Activated CD4-positive, alpha-beta T cell treated with anti-CD3 and anti-CD28 coated beads, Interleukin-2, amount 10 ng/mL, durations not matched to agents 24 days and 14 days (primary cell): ENCODE measurements at regions of chr11 and their contacts with region 1.

Region 1: DNA sequence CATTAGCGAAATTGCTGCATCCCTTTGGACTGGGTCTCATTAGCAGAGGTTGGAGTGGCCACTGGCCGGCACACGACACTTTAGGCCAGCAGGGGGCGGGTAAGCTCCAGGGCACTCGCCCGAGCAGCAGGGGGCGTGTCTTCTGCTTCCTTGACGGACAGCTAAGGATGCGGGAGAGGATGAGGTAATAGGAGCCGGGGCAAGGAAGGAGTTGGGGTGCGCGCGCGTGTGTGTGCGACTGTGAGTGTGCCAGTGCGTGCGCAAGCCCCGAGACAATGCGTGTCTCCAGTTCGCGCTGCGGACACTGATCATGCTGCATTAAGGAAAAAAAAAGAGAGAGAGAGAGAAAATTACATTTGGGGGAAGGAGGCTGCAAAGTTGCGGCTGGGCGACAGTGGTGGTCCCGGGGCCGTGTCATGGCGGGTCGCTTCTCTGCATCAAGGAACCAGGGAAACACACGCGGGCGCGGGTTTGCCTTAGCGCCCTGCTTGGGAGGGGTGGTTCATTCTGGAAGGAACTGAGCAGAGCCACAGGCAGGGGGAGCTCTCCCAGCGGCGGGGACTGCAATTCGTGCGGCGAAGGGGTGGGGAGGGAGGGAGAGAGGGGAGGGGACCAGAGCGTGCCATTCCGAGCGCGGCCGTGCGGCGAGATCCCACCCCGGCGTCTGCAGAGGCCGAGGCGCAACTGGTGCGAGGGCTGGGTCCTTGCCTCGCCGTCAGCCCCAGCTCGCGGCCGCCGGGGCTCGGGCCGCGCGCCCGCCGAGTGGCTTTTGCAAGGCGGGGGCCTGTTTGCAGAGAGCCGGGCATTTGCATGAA is at the start of gene DTX4:
- DNase-seq: peak; percentile 97
- H3K4me3 Mint-ChIP-seq: peak within 1 kb of the TSS; percentile 87
- H3K27ac Mint-ChIP-seq: no peak within 1 kb of the TSS
- H3K4me1 Mint-ChIP-seq: peaks cover 9% of the 10 kb centered on the region
- H3K27me3 Mint-ChIP-seq: peaks cover 36% of the 10 kb centered on the region
- total RNA-seq, gene DTX4: 0.17 and 0.47 TPM in 2 replicates

Region 2: DNA sequence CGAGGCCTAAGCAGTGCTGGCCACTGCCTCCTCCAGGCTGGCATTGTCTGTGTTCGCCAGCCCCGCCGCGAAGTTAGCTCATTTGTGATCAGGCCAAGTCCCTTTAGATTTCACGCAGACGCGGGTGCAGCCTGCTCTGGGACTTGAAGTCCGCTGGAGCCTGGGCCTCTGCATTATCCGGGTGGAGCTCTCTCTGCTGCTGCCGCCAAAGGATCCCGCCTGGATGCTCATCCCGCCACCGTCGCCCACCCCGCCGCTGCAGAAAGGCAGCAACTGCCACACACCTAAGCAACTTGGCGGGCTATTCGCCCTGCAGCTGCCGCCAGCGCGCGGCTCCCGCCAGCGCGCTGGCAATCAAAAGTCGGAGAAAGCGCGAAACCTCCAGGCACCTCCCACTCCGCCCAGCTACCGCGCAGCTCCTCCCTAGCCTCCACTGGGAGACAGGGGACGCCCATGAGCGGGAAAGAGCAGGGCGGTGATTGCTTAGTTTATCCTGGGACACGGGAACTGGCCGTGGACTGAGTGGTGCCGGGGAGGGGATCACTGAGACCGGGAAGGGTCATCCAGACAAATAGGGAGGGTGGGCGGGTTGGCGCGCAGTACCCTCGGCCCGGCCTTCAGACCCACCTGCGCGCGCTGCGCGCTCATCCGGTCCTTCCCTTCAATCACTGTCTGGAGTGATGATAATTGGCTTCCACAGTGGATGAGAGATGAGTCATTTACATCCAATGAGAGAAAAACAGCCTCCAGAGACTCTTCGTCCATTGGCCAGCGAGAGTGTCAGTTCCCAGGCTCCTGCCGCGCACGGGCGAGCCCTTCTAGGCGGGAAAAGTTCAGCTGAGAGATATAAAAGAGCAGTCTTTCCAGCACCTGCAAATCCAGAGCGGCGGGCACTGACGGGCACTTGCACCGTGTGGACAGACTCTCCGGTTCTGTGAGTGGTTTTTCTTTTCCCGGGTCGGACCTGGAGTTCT is 65.1 kb before region 1 on chr11 and contains the start of gene FAM111B:
- intact Hi-C with region 1: no loop called
- DNase-seq: peak; percentile 93
- H3K4me3 Mint-ChIP-seq: peak within 1 kb of the TSS; percentile 94
- H3K27ac Mint-ChIP-seq: peak within 1 kb of the TSS; percentile 85
- H3K4me1 Mint-ChIP-seq: peaks cover 66% of the 10 kb centered on the region
- H3K27me3 Mint-ChIP-seq: no peaks in the 10 kb centered on the region
- total RNA-seq, gene FAM111B: 68.4 and 70.1 TPM in 2 replicates

Region 3: GRCh38 chr11:59199546-59200422 is 28.1 kb after region 1 on chr11:
- intact Hi-C with region 1: loop called (anchors 2 kb)
- DNase-seq: no peak
- H3K4me3 Mint-ChIP-seq: no peak overlapping the region
- H3K27ac Mint-ChIP-seq: peak overlapping the region; percentile 10
- H3K4me1 Mint-ChIP-seq: peaks cover 12% of the 10 kb centered on the region
- H3K27me3 Mint-ChIP-seq: peaks cover 24% of the 10 kb centered on the region

Region 4: DNA sequence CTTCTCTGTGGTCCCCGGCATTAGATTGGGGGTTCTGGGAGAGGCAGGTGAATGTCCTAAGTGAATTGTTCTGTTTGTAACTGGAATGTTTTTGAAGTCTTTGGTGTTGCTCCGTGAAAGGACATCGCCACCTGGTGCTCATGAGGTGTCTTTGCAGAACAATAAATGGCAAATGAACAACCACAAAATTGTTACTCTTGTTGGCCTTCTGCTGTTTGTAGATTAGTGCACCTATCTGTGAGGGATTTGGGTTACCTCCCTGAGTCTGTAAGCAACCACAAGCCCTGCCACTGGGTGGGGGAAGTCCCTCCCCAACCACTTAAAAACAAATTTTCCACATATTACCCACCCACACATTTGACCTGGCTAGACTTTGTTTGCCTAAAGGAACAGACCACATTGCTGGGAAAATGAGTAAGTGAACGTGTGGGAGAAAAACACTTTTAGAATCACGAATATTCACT is 36.3 kb after region 1 on chr11:
- intact Hi-C with region 1: loop called (anchors 1 kb)
- DNase-seq: peak; percentile 73
- H3K4me3 Mint-ChIP-seq: peak overlapping the region; percentile 59
- H3K27ac Mint-ChIP-seq: peak overlapping the region; percentile 64
- H3K4me1 Mint-ChIP-seq: peaks cover 29% of the 10 kb centered on the region
- H3K27me3 Mint-ChIP-seq: peaks cover 56% of the 10 kb centered on the region

Region 5: GRCh38 chr11:59283825-59284772 is 112.4 kb after region 1 on chr11:
- intact Hi-C with region 1: loop called (anchors 1 kb)
- DNase-seq: peak; percentile 82
- H3K4me3 Mint-ChIP-seq: peak overlapping the region; percentile 73
- H3K27ac Mint-ChIP-seq: no peak overlapping the region
- H3K4me1 Mint-ChIP-seq: peaks cover 7% of the 10 kb centered on the region
- H3K27me3 Mint-ChIP-seq: peaks cover 18% of the 10 kb centered on the region

Region 6: GRCh38 chr11:59295435-59295834 is 123.7 kb after region 1 on chr11:
- intact Hi-C with region 1: no loop called
- DNase-seq: no peak
- H3K4me3 Mint-ChIP-seq: no peak overlapping the region
- H3K27ac Mint-ChIP-seq: no peak overlapping the region
- H3K4me1 Mint-ChIP-seq: no peaks in the 10 kb centered on the region
- H3K27me3 Mint-ChIP-seq: peaks cover 11% of the 10 kb centered on the region

Region 7: GRCh38 chr11:59429924-59430516 is 258.3 kb after region 1 on chr11:
- intact Hi-C with region 1: loop called (anchors 1 kb)
- DNase-seq: peak; percentile 85
- H3K4me3 Mint-ChIP-seq: no peak overlapping the region
- H3K27ac Mint-ChIP-seq: no peak overlapping the region
- H3K4me1 Mint-ChIP-seq: no peaks in the 10 kb centered on the region
- H3K27me3 Mint-ChIP-seq: peaks cover 17% of the 10 kb centered on the region

Region 8: DNA sequence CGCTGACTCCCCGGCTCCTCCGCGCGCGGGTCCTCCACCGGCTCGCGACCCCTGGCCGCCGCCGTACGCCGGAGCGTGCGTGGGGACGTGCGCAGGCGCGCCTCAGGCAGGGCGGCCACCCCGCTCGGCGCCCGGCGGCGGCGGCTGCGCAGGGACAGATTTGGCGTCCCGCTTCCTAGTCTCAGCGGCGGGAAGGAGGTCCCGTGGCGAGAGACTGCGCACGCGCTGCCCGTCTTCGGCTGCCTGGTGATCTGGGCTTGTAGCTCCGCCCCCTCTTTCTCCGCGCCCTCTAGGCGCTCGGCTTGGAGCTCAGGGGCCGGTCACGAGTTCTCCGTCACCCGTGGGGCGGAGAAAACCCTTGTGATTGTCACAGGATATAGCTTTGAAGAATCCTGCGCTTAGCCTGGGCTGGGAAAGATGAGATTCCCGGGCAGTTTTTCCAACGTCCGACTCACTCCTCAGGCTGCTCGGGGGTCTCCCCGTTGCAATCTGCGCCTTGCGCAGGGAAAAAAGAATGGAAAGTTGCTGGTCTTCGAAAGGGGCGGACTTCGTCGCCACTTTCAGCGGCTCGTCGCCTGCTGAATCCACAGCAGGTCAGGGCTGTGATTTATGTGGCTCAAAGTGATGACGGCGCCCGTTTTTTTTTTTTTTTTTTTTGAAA is 497.4 kb after region 1 on chr11 and contains the start of gene PATL1:
- intact Hi-C with region 1: loop called (anchors 10 kb)
- DNase-seq: peak; percentile 100
- H3K4me3 Mint-ChIP-seq: peak within 1 kb of the TSS; percentile 98
- H3K27ac Mint-ChIP-seq: peak within 1 kb of the TSS; percentile 97
- H3K4me1 Mint-ChIP-seq: peaks cover 40% of the 10 kb centered on the region
- H3K27me3 Mint-ChIP-seq: peaks cover 1% of the 10 kb centered on the region
- total RNA-seq, gene PATL1: 72.4 and 76.1 TPM in 2 replicates